CD4-positive, alpha-beta T cell (primary cell): ENCODE measurements at regions of chr16 and their contacts with region 1.

Region 1: GRCh38 chr16:21656795-21657768 is 4.7 kb upstream of the IGSF6 start:
- DNase-seq: peak in 8 of 14 experiments; percentile 28 to 83 (median 52)
- ATAC-seq: peak; percentile 22
- H3K4me3 ChIP-seq: no peak overlapping the region
- H3K4me3 Mint-ChIP-seq: no peak overlapping the region
- H3K27ac ChIP-seq: no peak overlapping the region
- H3K27ac Mint-ChIP-seq: peak overlapping the region; percentile 72
- H3K4me1 ChIP-seq: peaks cover 25% of the 10 kb centered on the region
- H3K4me1 Mint-ChIP-seq: peaks cover 51% of the 10 kb centered on the region
- H3K27me3 ChIP-seq: no peaks in the 10 kb centered on the region
- H3K27me3 Mint-ChIP-seq: no peaks in the 10 kb centered on the region
- CTCF ChIP-seq: peak; percentile 91

Region 2: GRCh38 chr16:21646721-21647561 is 10.1 kb before region 1 on chr16:
- CTCF ChIA-PET with region 1: interaction called, 90 read pairs
- POLR2A ChIA-PET with region 1: interaction called, 15 read pairs
- intact Hi-C with region 1: no loop called
- DNase-seq: peak; percentile 50 to 90 (median 68)
- ATAC-seq: peak; percentile 79
- H3K4me3 ChIP-seq: peak overlapping the region; percentile 6
- H3K4me3 Mint-ChIP-seq: peak overlapping the region; percentile 75
- H3K27ac ChIP-seq: peak overlapping the region; percentile 66 to 82
- H3K27ac Mint-ChIP-seq: peak overlapping the region; percentile 91
- H3K4me1 ChIP-seq: peaks cover 59% of the 10 kb centered on the region
- H3K4me1 Mint-ChIP-seq: peaks cover 56% of the 10 kb centered on the region
- H3K27me3 ChIP-seq: no peaks in the 10 kb centered on the region
- H3K27me3 Mint-ChIP-seq: no peaks in the 10 kb centered on the region
- CTCF ChIP-seq: no peak

Region 3: GRCh38 chr16:21708533-21709115 is 51.5 kb after region 1 on chr16:
- CTCF ChIA-PET with region 1: interaction called, 35 read pairs
- POLR2A ChIA-PET with region 1: interaction called, 5 read pairs
- intact Hi-C with region 1: loop called (anchors 1 kb)
- DNase-seq: peak; percentile 71 to 93 (median 85)
- ATAC-seq: peak; percentile 84
- H3K4me3 ChIP-seq: no peak overlapping the region
- H3K4me3 Mint-ChIP-seq: no peak overlapping the region
- H3K27ac ChIP-seq: no peak overlapping the region
- H3K27ac Mint-ChIP-seq: no peak overlapping the region
- H3K4me1 ChIP-seq: peaks cover 3% of the 10 kb centered on the region
- H3K4me1 Mint-ChIP-seq: peaks cover 5% of the 10 kb centered on the region
- H3K27me3 ChIP-seq: no peaks in the 10 kb centered on the region
- H3K27me3 Mint-ChIP-seq: no peaks in the 10 kb centered on the region
- CTCF ChIP-seq: peak; percentile 88

Region 4: GRCh38 chr16:21946889-21947635 is 290.0 kb after region 1 on chr16:
- CTCF ChIA-PET with region 1: no interaction called
- POLR2A ChIA-PET with region 1: no interaction called
- intact Hi-C with region 1: loop called in 1 of 2 experiments (anchors 5 kb)
- DNase-seq: peak in 2 of 14 experiments; percentile 24 to 42
- ATAC-seq: peak; percentile 74
- H3K4me3 ChIP-seq: no peak overlapping the region
- H3K4me3 Mint-ChIP-seq: peak overlapping the region; percentile 59
- H3K27ac ChIP-seq: no peak overlapping the region
- H3K27ac Mint-ChIP-seq: peak overlapping the region; percentile 79
- H3K4me1 ChIP-seq: peaks cover 27% of the 10 kb centered on the region
- H3K4me1 Mint-ChIP-seq: peaks cover 37% of the 10 kb centered on the region
- H3K27me3 ChIP-seq: no peaks in the 10 kb centered on the region
- H3K27me3 Mint-ChIP-seq: no peaks in the 10 kb centered on the region
- CTCF ChIP-seq: no peak

Region 5: DNA sequence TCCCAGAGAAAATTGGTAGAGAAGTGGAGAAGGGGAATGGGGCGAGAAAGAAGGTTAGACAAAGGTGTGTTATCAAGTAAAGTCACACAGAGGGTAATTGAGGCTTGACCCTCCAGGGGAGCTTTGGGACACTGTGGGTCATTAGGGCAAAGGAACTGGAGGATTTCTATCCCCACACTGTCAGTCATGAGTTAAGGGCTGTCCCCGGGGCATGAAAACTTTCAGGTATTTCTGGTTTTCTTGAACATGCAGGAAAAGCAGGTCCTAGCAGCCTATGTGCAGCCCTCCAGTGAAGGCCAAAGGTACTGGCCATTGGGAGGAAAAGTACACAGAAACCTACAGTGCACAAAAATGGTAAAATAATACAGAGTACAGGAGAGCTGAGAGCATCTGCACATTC is 1600.6 kb after region 1 on chr16:
- CTCF ChIA-PET with region 1: no interaction called
- POLR2A ChIA-PET with region 1: no interaction called
- intact Hi-C with region 1: no loop called
- DNase-seq: no peak
- ATAC-seq: no peak
- H3K4me3 ChIP-seq: no peak overlapping the region
- H3K4me3 Mint-ChIP-seq: no peak overlapping the region
- H3K27ac ChIP-seq: no peak overlapping the region
- H3K27ac Mint-ChIP-seq: no peak overlapping the region
- H3K4me1 ChIP-seq: no peaks in the 10 kb centered on the region
- H3K4me1 Mint-ChIP-seq: no peaks in the 10 kb centered on the region
- H3K27me3 ChIP-seq: no peaks in the 10 kb centered on the region
- H3K27me3 Mint-ChIP-seq: peaks cover 4% of the 10 kb centered on the region
- CTCF ChIP-seq: no peak